SK-N-SH (cell line): ENCODE measurements at regions of chr3 and their contacts with region 1.

Region 1: GRCh38 chr3:184513276-184514170 is 48.1 kb upstream of the EPHB3 start:
- DNase-seq: peak; percentile 94
- H3K4me3 ChIP-seq: peak overlapping the region; percentile 33 to 55
- H3K27ac ChIP-seq: no peak overlapping the region
- H3K4me1 ChIP-seq: peaks cover 0 to 7% of the 10 kb centered on the region in 2 experiments; a peak in 1 of 4 replicates
- H3K27me3 ChIP-seq: peaks cover 52% of the 10 kb centered on the region
- CTCF ChIP-seq: peak; percentile 76
- EP300 ChIP-seq: no peak
- RAD21 ChIP-seq: peak; percentile 81

Region 2: DNA sequence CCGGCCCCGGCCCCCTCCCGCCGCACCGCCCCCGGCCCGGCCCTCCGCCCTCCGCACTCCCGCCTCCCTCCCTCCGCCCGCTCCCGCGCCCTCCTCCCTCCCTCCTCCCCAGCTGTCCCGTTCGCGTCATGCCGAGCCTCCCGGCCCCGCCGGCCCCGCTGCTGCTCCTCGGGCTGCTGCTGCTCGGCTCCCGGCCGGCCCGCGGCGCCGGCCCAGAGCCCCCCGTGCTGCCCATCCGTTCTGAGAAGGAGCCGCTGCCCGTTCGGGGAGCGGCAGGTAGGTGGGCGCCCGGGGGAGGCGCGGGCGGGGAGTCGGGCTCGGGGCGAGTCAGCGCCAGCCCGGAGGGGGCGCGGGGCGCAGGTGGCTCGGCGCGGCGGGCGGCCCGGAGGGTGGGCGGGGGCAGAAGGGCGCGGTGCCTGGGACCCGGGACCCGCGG is 133.3 kb before region 1 on chr3:
- CTCF ChIA-PET with region 1: interaction called, 142 read pairs
- POLR2A ChIA-PET with region 1: no interaction called
- DNase-seq: peak; percentile 91
- H3K4me3 ChIP-seq: peak overlapping the region; percentile 48 to 53
- H3K27ac ChIP-seq: no peak overlapping the region
- H3K4me1 ChIP-seq: peaks cover 0 to 12% of the 10 kb centered on the region in 2 experiments; a peak in 1 of 4 replicates
- H3K27me3 ChIP-seq: peaks cover 7% of the 10 kb centered on the region; the same call in 1 of the 2 replicates
- CTCF ChIP-seq: no peak
- EP300 ChIP-seq: no peak
- RAD21 ChIP-seq: no peak

Region 3: DNA sequence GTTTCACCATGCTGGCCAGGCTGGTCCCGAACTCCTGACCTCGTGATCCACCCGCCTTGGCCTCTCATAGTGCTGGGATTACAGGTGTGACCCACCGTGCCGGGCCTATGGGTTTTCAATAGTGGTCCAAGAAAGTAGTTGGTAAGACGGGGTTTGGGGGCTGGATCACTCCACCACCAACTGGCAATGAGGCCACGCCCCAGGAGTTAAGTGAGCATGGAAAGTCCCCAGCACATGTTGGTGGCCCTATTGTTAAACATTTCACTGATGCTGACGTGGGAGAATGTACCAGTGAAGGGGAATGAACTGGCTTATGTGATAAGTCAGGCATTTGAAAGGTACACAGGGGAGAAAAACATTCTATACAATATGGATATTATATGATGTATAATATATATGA is 53.2 kb before region 1 on chr3:
- CTCF ChIA-PET with region 1: interaction called, 85 read pairs
- POLR2A ChIA-PET with region 1: no interaction called
- DNase-seq: no peak
- H3K4me3 ChIP-seq: no peak overlapping the region
- H3K27ac ChIP-seq: no peak overlapping the region
- H3K4me1 ChIP-seq: peaks cover 0 to under 1% of the 10 kb centered on the region in 2 experiments; a peak in 1 of 4 replicates
- H3K27me3 ChIP-seq: no peaks in the 10 kb centered on the region
- CTCF ChIP-seq: no peak
- EP300 ChIP-seq: no peak
- RAD21 ChIP-seq: no peak

Region 4: GRCh38 chr3:184481984-184482671 is 31.4 kb before region 1 on chr3:
- CTCF ChIA-PET with region 1: interaction called, 18 read pairs
- POLR2A ChIA-PET with region 1: no interaction called
- DNase-seq: no peak
- H3K4me3 ChIP-seq: no peak overlapping the region
- H3K27ac ChIP-seq: no peak overlapping the region
- H3K4me1 ChIP-seq: no peaks in the 10 kb centered on the region
- H3K27me3 ChIP-seq: peaks cover 28% of the 10 kb centered on the region
- CTCF ChIP-seq: no peak
- EP300 ChIP-seq: no peak
- RAD21 ChIP-seq: no peak

Region 5: GRCh38 chr3:184531626-184532280 is 18.2 kb after region 1 on chr3:
- CTCF ChIA-PET with region 1: interaction called, 29 read pairs
- POLR2A ChIA-PET with region 1: no interaction called
- DNase-seq: no peak
- H3K4me3 ChIP-seq: no peak overlapping the region
- H3K27ac ChIP-seq: no peak overlapping the region
- H3K4me1 ChIP-seq: no peaks in the 10 kb centered on the region
- H3K27me3 ChIP-seq: peaks cover 73% of the 10 kb centered on the region
- CTCF ChIP-seq: no peak
- EP300 ChIP-seq: no peak
- RAD21 ChIP-seq: no peak